Activated naive CD4-positive, alpha-beta T cell treated with anti-CD3 and anti-CD28 coated beads for 36 hours (primary cell): ENCODE measurements at regions of chr15 and their contacts with region 1.

Region 1: GRCh38 chr15:48285329-48286214 is 45.7 kb upstream of the DUT start:
- DNase-seq: peak; percentile 66
- H3K4me3 Mint-ChIP-seq: no peak overlapping the region
- H3K27ac Mint-ChIP-seq: no peak overlapping the region
- H3K4me1 Mint-ChIP-seq: peaks cover 7% of the 10 kb centered on the region
- H3K27me3 Mint-ChIP-seq: peaks cover 1% of the 10 kb centered on the region

Region 2: GRCh38 chr15:47196057-47196456 is 1089.5 kb before region 1 on chr15:
- CTCF ChIA-PET with region 1: interaction called, 11 read pairs
- intact Hi-C with region 1: loop called (anchors 1 kb)
- DNase-seq: peak; percentile 67
- H3K4me3 Mint-ChIP-seq: no peak overlapping the region
- H3K27ac Mint-ChIP-seq: no peak overlapping the region
- H3K4me1 Mint-ChIP-seq: no peaks in the 10 kb centered on the region
- H3K27me3 Mint-ChIP-seq: peaks cover 18% of the 10 kb centered on the region

Region 3: DNA sequence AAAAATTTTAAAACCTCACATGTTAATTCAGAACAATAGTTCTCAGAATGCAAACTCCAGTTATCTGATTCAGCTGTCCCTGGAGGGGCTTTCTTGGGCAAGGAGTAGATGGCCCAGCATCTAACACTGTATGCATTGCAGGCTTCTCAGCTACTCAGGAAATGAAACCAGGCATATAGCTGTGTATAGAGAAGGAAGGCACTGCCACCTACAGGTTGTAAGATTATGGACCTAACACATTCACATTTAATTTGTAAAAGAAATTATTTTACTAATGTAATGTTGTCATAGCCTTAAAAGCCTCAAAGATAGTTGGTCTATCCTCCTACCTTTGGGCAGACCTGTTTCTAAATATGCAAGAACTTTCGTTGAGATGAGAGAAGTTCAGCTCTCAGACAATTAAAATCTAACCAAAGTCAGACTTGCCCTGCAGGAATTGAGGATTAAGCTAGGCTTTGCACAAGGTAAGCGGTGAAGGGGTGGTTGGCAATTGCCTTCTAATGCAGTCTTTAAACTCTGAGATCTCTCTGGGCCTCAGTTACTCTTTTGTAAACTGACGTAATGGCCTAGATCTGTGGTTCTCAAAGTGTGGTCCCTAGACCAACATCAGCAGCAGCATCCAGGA is 297.6 kb before region 1 on chr15:
- CTCF ChIA-PET with region 1: interaction called, 3 read pairs
- intact Hi-C with region 1: loop called (anchors 5 kb)
- DNase-seq: peak; percentile 40
- H3K4me3 Mint-ChIP-seq: no peak overlapping the region
- H3K27ac Mint-ChIP-seq: no peak overlapping the region
- H3K4me1 Mint-ChIP-seq: no peaks in the 10 kb centered on the region
- H3K27me3 Mint-ChIP-seq: peaks cover 3% of the 10 kb centered on the region

Region 4: DNA sequence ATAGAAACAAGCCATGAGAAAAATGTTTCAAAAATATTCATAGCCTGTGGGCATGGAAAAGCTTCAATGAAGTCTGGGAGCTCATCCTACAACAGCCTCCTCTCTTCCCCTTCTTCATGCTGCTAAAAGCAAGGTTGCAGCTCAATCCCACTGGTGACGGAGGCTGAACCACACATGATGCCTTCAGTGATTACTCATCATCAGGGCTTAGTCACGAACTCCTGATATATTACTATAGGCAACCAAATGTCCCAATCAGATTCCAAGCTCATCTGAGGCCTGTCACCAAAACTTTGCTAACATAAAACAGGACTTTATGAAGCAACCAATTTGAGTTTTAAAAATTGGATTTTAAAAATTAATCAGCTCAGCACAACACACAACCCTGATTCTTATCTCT is 188.8 kb before region 1 on chr15:
- CTCF ChIA-PET with region 1: no interaction called
- intact Hi-C with region 1: no loop called
- DNase-seq: no peak
- H3K4me3 Mint-ChIP-seq: no peak overlapping the region
- H3K27ac Mint-ChIP-seq: no peak overlapping the region
- H3K4me1 Mint-ChIP-seq: no peaks in the 10 kb centered on the region
- H3K27me3 Mint-ChIP-seq: peaks cover 13% of the 10 kb centered on the region

Region 5: GRCh38 chr15:48131324-48131723 is 154.2 kb before region 1 on chr15:
- CTCF ChIA-PET with region 1: no interaction called
- intact Hi-C with region 1: no loop called
- DNase-seq: no peak
- H3K4me3 Mint-ChIP-seq: no peak overlapping the region
- H3K27ac Mint-ChIP-seq: no peak overlapping the region
- H3K4me1 Mint-ChIP-seq: no peaks in the 10 kb centered on the region
- H3K27me3 Mint-ChIP-seq: peaks cover 3% of the 10 kb centered on the region

Region 6: DNA sequence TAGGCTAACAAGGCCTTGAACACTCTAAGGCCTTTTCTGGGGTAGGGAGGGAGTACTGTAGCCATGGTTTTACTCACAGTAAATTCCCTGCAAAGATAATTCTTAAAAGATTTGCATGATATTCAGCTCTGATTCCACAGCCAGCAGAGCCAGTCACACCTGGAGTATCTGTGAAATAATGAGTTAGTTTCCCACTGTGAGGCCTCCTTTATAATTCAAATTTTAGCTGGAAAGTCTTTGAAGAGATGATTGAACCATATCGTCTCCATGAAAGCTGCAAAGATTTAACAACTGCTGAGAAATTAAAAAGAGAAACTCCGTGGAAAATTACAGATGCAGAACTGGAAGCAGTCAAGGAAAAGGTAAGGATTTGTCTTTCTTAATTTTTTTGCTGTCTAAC is 13.3 kb after region 1 on chr15:
- CTCF ChIA-PET with region 1: interaction called, 16 read pairs
- intact Hi-C with region 1: no loop called
- DNase-seq: no peak
- H3K4me3 Mint-ChIP-seq: no peak overlapping the region
- H3K27ac Mint-ChIP-seq: no peak overlapping the region
- H3K4me1 Mint-ChIP-seq: no peaks in the 10 kb centered on the region
- H3K27me3 Mint-ChIP-seq: no peaks in the 10 kb centered on the region